Endothelial cell of umbilical vein (primary cell): ENCODE measurements at regions of chr13 and their contacts with region 1.

Region 1: GRCh38 chr13:45718063-45718462 is 15.9 kb downstream of the CBY2 start:
- DNase-seq: no peak
- H3K4me3 ChIP-seq: no peak overlapping the region
- H3K27ac ChIP-seq: no peak overlapping the region
- H3K4me1 ChIP-seq: peaks cover 14% of the 10 kb centered on the region
- H3K27me3 ChIP-seq: peaks cover under 1 to 3% of the 10 kb centered on the region in 2 experiments
- CTCF ChIP-seq: peak; percentile 6 to 28
- POLR2A ChIP-seq: no peak

Region 2: GRCh38 chr13:45623515-45624090 is 94.5 kb before region 1 on chr13:
- CTCF ChIA-PET with region 1: no interaction called
- POLR2A ChIA-PET with region 1: no interaction called
- dilution Hi-C with region 1: no loop called
- intact Hi-C with region 1: loop called (anchors 1 kb)
- DNase-seq: peak; percentile 31
- H3K4me3 ChIP-seq: no peak overlapping the region
- H3K27ac ChIP-seq: no peak overlapping the region
- H3K4me1 ChIP-seq: no peaks in the 10 kb centered on the region
- H3K27me3 ChIP-seq: peaks cover 2 to 16% of the 10 kb centered on the region in 2 experiments
- CTCF ChIP-seq: peak; percentile 19 to 36
- POLR2A ChIP-seq: no peak